ENCODE measurements at regions of chr7 and their contacts with region 1.

Region 1: DNA sequence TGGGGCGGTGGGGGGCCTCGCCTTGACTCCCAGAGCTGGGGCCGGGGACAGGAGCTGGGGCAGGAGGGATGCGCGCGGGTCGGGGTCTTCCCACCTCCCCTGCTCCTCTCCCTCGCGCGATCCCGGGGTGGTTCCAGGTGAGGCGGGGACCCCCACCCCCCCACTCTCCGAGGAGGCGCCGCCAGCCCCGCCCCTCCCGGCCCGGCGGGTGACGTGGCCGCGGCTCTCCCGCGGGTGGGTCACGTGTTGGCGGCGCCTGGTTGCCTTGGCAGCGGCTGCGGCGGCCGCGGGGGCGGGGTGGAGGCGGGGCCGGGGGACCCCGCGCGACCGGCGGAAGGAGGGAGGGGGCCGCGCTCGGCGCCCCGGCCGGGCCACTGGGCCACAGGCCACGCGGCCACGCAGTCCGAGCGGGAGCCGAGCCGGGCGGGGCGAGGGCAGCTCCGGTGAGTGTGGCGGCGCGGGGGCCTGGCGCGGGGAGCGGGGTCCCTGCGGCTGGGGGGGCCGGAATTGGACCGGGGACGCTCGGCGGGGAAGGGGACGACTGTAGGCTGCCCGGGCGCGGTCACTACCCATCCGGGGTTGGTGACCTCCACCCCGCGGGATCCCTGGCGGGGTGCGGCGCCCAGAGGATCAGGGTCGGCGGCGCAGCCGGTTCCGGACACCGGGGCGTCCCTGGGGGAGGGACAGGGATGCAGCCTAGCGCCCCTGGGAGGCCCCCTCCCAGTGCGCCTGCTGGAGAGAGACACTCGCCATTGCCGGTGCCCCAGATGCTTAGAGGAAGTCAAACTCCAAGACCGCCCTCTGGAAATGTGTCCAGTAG is at the start of gene ORAI2:
- DNase-seq: peak; percentile 76 to 92 (median 87)
- ATAC-seq: peak; percentile 55
- H3K4me3 ChIP-seq: peak within 1 kb of the TSS; percentile 78 to 82
- H3K4me3 Mint-ChIP-seq: peak within 1 kb of the TSS; percentile 82
- H3K27ac ChIP-seq: peak within 1 kb of the TSS; percentile 71 to 94
- H3K27ac Mint-ChIP-seq: peak within 1 kb of the TSS; percentile 100
- H3K4me1 ChIP-seq: peaks cover 57% of the 10 kb centered on the region
- H3K4me1 Mint-ChIP-seq: peaks cover 54% of the 10 kb centered on the region
- H3K27me3 ChIP-seq: no peaks in the 10 kb centered on the region
- H3K27me3 Mint-ChIP-seq: no peaks in the 10 kb centered on the region
- CTCF ChIP-seq: no peak
- total RNA-seq, gene ORAI2: 20.4 to 25.5 TPM

Region 2: DNA sequence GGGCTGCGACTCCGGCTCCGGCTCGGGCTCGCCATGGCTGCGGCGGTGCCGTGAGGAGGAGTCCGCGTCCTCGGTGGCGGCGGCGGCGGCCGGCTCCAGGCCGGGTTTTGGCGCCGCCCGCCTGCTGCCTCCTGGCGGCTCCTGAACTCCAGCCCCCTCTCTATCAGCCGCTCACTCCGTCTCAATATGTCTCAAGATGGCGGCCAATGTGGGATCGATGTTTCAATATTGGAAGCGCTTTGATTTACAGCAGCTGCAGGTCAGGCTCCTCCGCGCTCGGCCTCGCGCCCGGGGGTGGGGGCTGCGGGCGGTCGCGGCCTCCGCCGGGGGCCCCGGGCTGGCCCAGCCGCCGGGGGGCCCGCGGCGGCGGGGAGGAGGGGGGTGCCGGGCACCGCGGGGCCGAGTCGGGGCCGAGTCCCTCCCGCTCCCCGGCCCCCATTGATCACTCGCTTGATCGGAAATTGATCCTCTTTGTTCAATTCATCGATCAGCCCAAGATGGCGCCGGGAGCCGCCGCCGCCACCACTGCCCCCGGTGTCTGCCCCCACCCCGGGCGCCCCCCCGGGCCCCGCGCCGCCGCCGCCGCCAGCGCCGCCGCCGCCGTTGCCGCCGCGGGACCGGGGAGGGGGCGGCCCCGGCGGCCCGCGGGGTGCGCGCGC is 617.5 kb before region 1 on chr7:
- CTCF ChIA-PET with region 1: no interaction called
- POLR2A ChIA-PET with region 1: no interaction called
- intact Hi-C with region 1: loop called in 1 of 2 experiments (anchors 5 kb)
- DNase-seq: peak; percentile 39 to 88 (median 71)
- ATAC-seq: peak; percentile 78
- H3K4me3 ChIP-seq: peak overlapping the region; percentile 38 to 55
- H3K4me3 Mint-ChIP-seq: peak overlapping the region; percentile 85
- H3K27ac ChIP-seq: no peak overlapping the region
- H3K27ac Mint-ChIP-seq: no peak overlapping the region
- H3K4me1 ChIP-seq: peaks cover 16% of the 10 kb centered on the region
- H3K4me1 Mint-ChIP-seq: peaks cover 36% of the 10 kb centered on the region
- H3K27me3 ChIP-seq: no peaks in the 10 kb centered on the region
- H3K27me3 Mint-ChIP-seq: no peaks in the 10 kb centered on the region
- CTCF ChIP-seq: no peak

Region 3: GRCh38 chr7:102248456-102249395 is 184.7 kb before region 1 on chr7:
- CTCF ChIA-PET with region 1: no interaction called
- POLR2A ChIA-PET with region 1: no interaction called
- intact Hi-C with region 1: no loop called
- DNase-seq: no peak
- ATAC-seq: no peak
- H3K4me3 ChIP-seq: no peak overlapping the region
- H3K4me3 Mint-ChIP-seq: no peak overlapping the region
- H3K27ac ChIP-seq: no peak overlapping the region
- H3K27ac Mint-ChIP-seq: no peak overlapping the region
- H3K4me1 ChIP-seq: no peaks in the 10 kb centered on the region
- H3K4me1 Mint-ChIP-seq: no peaks in the 10 kb centered on the region
- H3K27me3 ChIP-seq: no peaks in the 10 kb centered on the region
- H3K27me3 Mint-ChIP-seq: no peaks in the 10 kb centered on the region
- CTCF ChIP-seq: no peak

Region 4: DNA sequence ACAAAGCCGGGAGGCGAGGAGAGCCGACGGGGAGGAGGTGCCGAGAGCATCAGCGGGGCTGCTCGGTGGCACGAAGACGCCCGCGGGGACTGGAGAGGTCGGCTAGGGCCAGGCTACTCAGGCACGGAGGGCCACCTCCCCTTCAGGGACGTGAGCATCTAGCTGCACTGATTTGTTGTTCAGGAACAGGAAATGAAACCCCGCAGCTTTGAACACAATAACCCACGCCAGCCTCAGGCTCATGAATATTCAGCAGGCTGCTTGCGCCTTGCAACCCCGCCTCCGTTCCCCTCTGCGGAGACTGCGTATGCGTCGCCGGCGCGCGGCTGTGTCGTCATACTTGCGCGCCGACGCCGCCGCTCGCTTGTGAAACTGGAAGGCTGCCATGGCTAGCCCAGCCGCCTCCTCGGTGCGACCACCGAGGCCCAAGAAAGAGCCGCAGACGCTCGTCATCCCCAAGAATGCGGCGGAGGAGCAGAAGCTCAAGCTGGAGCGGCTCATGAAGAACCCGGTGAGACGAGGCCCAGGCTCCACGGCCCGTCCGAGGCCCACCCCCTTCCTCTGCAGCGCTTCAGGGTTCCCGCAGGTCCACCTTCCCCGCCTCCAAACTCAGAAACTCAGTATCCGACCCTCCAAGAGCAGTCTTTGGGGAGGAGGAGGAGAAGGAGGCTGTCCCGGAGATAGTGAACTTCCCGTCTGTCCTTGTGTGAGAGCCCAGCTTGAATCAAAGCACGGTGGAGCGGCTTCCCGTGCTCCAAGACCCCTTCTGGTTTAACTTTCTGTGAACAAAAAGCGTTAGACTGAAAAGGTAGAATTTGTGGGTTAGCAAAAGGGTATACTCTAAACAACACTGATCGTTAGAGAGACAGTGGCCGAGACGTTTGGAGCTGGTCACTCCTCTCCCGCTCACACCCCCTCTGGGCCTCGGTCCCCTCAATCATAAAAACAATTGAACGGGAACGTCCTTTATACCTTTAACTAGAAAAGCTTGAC is 37.1 kb before region 1 on chr7 and contains the start of gene PRKRIP1:
- CTCF ChIA-PET with region 1: interaction called, 7 read pairs
- POLR2A ChIA-PET with region 1: interaction called, 7 read pairs
- intact Hi-C with region 1: loop called (anchors 1 to 5 kb)
- DNase-seq: peak; percentile 68 to 97 (median 84)
- ATAC-seq: peak; percentile 96
- H3K4me3 ChIP-seq: peak within 1 kb of the TSS; percentile 84 to 92
- H3K4me3 Mint-ChIP-seq: peak within 1 kb of the TSS; percentile 96
- H3K27ac ChIP-seq: peak within 1 kb of the TSS; percentile 82 to 84
- H3K27ac Mint-ChIP-seq: peak within 1 kb of the TSS; percentile 97
- H3K4me1 ChIP-seq: peaks cover 13% of the 10 kb centered on the region
- H3K4me1 Mint-ChIP-seq: peaks cover 26% of the 10 kb centered on the region
- H3K27me3 ChIP-seq: no peaks in the 10 kb centered on the region
- H3K27me3 Mint-ChIP-seq: no peaks in the 10 kb centered on the region
- CTCF ChIP-seq: no peak
- total RNA-seq, gene PRKRIP1: 51.1 to 57.2 TPM

Region 5: GRCh38 chr7:102404005-102404861 is 29.2 kb before region 1 on chr7:
- CTCF ChIA-PET with region 1: interaction called, 12 read pairs
- POLR2A ChIA-PET with region 1: interaction called, 4 read pairs
- intact Hi-C with region 1: loop called (anchors 2 to 5 kb)
- DNase-seq: peak in 7 of 9 experiments; percentile 32 to 83 (median 56)
- ATAC-seq: peak; percentile 100
- H3K4me3 ChIP-seq: no peak overlapping the region
- H3K4me3 Mint-ChIP-seq: no peak overlapping the region
- H3K27ac ChIP-seq: no peak overlapping the region
- H3K27ac Mint-ChIP-seq: no peak overlapping the region
- H3K4me1 ChIP-seq: no peaks in the 10 kb centered on the region
- H3K4me1 Mint-ChIP-seq: peaks cover 13% of the 10 kb centered on the region
- H3K27me3 ChIP-seq: no peaks in the 10 kb centered on the region
- H3K27me3 Mint-ChIP-seq: no peaks in the 10 kb centered on the region
- CTCF ChIP-seq: peak; percentile 75

Region 6: DNA sequence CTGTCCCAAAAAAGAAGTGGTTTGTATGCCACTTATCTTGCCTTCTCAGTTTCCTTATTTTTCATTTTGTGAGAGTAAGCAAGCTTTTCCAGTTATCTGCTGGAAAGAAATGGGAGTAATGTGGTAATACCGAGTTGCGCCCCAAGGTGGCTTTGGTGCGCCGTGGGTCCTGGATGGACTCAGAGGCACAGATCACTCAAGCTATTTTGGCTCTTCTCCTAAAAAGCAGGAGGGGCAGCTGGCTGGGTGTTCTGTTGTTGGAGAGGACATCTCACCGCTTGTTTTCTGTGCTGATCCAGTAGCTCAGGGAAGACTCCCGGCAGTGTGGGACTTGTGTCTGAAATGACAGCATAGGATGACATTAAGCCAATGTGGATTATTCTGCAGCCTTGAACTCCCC is 20.9 kb before region 1 on chr7:
- CTCF ChIA-PET with region 1: interaction called, 8 read pairs
- POLR2A ChIA-PET with region 1: interaction called, 28 read pairs
- intact Hi-C with region 1: loop called (anchors 1 kb)
- DNase-seq: peak in 7 of 9 experiments; percentile 38 to 71 (median 62)
- ATAC-seq: peak; percentile 32
- H3K4me3 ChIP-seq: no peak overlapping the region
- H3K4me3 Mint-ChIP-seq: no peak overlapping the region
- H3K27ac ChIP-seq: no peak overlapping the region
- H3K27ac Mint-ChIP-seq: no peak overlapping the region
- H3K4me1 ChIP-seq: peaks cover 37% of the 10 kb centered on the region
- H3K4me1 Mint-ChIP-seq: peaks cover 40% of the 10 kb centered on the region
- H3K27me3 ChIP-seq: no peaks in the 10 kb centered on the region
- H3K27me3 Mint-ChIP-seq: no peaks in the 10 kb centered on the region
- CTCF ChIP-seq: peak; percentile 66